ENCODE measurements at regions of chr2 and their contacts with region 1.

Region 1: GRCh38 chr2:24360050-24360962 is at the start of gene ITSN2:
- DNase-seq: peak; percentile 82 to 90 (median 86)
- H3K4me3 ChIP-seq: peak within 1 kb of the TSS; percentile 24 to 89
- H3K4me3 Mint-ChIP-seq: peak within 1 kb of the TSS; percentile 90 to 96 (median 94)
- H3K27ac ChIP-seq: peak within 1 kb of the TSS; percentile 96
- H3K27ac Mint-ChIP-seq: peak within 1 kb of the TSS; percentile 91 to 98 (median 96)
- H3K4me1 ChIP-seq: peaks cover 31% of the 10 kb centered on the region
- H3K4me1 Mint-ChIP-seq: peaks cover 18 to 41% (median 30%) of the 10 kb centered on the region in 4 donors
- H3K27me3 ChIP-seq: no peaks in the 10 kb centered on the region
- H3K27me3 Mint-ChIP-seq: no peaks in the 10 kb centered on the region
- total RNA-seq, gene ITSN2: 133 to 135 TPM

Region 2: DNA sequence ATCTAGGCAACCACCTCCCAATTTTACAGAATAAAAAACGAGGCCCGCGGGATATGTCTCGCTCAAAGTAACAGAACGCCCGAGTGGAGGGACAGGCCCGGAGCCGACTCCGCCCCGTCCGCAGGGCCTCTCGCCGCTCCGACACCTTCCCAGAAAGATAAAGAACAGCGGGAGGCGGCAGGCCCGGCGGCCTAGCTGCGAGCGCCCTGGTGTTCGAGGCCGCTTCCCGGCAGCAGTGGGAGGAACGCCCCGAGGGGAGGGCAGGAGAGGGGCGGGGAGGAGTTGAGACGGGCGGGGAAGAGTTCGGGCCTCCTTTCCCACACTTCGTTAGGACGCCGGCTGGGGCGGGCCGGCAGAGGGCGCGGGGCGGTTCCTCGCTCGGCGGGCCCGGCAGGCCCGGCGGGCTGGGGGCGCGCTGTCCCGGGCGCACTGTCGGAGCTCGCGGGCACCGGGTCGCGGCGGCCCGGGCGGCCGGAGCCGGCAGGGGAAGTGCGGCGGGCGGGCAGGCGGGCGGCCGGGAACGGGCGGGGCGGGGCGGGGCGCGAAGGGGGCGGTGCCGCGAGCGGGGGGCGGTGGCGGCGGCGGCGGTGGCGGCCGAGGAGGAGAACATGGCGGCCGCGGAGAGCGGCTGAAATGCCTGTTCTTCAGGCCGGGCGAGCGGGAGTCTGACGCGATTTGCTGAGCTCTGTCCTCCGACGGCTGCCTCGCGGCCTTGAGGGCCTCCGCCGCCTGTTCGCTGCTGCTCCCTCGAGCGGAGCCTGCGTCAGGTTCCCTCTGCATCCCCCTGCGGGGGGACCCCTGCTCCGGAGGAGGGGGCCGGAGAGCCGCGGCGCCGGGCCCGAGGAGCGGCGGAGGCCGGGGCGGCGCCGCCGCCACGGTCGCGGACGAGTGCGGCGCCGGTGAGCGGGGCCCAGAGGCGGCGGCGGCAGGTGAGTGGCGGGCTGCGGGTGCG is 130.6 kb after region 1 on chr2 and contains the start of gene NCOA1:
- CTCF ChIA-PET with region 1: no interaction called
- POLR2A ChIA-PET with region 1: interaction called, 7 read pairs
- intact Hi-C with region 1: loop called (anchors 2 kb)
- DNase-seq: peak; percentile 90 to 92 (median 92)
- H3K4me3 ChIP-seq: peak within 1 kb of the TSS; percentile 51 to 62
- H3K4me3 Mint-ChIP-seq: peak within 1 kb of the TSS; percentile 87 to 95 (median 90)
- H3K27ac ChIP-seq: peak within 1 kb of the TSS; percentile 84
- H3K27ac Mint-ChIP-seq: peak within 1 kb of the TSS; percentile 94 to 98 (median 97)
- H3K4me1 ChIP-seq: peaks cover 51% of the 10 kb centered on the region
- H3K4me1 Mint-ChIP-seq: peaks cover 39 to 57% (median 50%) of the 10 kb centered on the region in 4 donors
- H3K27me3 ChIP-seq: no peaks in the 10 kb centered on the region
- H3K27me3 Mint-ChIP-seq: no peaks in the 10 kb centered on the region
- total RNA-seq, gene NCOA1: 40.6 to 46.2 TPM